Activated B cell treated with CpG ODN at 0.5 μM for 24 hours (primary cell): ENCODE measurements at regions of chr19 and their contacts with region 1.

Region 1: GRCh38 chr19:3821857-3822364 is 35.7 kb upstream of the MATK start:
- DNase-seq: peak; percentile 83
- ATAC-seq: peak; percentile 93
- H3K4me3 Mint-ChIP-seq: no peak overlapping the region
- H3K27ac Mint-ChIP-seq: peak overlapping the region; percentile 16
- H3K4me1 Mint-ChIP-seq: peaks cover 15% of the 10 kb centered on the region
- H3K27me3 Mint-ChIP-seq: no peaks in the 10 kb centered on the region
- CTCF ChIP-seq: peak; percentile 66

Region 2: DNA sequence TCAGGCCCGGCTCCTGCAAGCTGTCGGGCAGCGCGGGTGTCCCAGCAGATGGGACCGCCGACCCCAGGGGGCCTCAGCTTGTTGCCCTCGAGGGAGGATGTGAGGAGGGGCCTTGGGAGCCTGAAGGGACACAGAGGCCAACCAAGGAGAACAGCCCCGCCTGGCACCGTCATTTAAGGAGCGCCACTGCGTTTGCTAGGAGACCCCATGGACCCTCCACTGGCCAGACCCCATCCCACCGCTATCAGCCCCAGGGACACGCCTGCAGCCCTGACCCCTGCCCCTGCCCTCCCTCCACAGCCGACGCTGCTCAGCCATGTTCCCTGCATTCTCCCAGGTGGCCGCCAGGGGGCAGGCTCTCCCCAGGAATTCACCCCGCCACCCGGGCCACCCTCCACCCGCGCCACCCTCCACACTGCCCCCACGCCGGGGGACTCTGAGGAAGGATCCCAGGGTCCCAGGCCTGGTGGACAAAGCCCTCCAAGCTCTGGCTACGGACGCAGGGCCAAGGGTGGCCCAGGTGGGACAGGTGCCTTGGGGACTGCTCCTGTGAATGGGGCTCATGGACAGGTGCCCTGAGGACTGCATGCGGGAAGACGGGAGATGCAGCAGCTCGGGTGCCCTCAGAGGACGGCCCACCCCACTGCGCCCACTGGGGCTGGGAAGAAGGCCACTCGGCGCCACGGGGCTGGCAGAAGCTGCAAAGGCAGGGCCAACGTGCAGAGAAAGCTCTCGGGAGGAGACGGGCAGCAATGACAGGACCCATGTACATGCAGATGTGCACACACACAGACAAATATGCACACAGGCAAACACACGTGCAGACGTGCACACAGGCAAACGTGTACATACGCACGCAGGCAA is 156.0 kb before region 1 on chr19:
- CTCF ChIA-PET with region 1: no interaction called
- POLR2A ChIA-PET with region 1: no interaction called
- intact Hi-C with region 1: loop called (anchors 1 kb)
- DNase-seq: peak; percentile 83
- ATAC-seq: peak; percentile 90
- H3K4me3 Mint-ChIP-seq: peak overlapping the region; percentile 64
- H3K27ac Mint-ChIP-seq: peak overlapping the region; percentile 59
- H3K4me1 Mint-ChIP-seq: peaks cover 34% of the 10 kb centered on the region
- H3K27me3 Mint-ChIP-seq: no peaks in the 10 kb centered on the region
- CTCF ChIP-seq: peak; percentile 40

Region 3: DNA sequence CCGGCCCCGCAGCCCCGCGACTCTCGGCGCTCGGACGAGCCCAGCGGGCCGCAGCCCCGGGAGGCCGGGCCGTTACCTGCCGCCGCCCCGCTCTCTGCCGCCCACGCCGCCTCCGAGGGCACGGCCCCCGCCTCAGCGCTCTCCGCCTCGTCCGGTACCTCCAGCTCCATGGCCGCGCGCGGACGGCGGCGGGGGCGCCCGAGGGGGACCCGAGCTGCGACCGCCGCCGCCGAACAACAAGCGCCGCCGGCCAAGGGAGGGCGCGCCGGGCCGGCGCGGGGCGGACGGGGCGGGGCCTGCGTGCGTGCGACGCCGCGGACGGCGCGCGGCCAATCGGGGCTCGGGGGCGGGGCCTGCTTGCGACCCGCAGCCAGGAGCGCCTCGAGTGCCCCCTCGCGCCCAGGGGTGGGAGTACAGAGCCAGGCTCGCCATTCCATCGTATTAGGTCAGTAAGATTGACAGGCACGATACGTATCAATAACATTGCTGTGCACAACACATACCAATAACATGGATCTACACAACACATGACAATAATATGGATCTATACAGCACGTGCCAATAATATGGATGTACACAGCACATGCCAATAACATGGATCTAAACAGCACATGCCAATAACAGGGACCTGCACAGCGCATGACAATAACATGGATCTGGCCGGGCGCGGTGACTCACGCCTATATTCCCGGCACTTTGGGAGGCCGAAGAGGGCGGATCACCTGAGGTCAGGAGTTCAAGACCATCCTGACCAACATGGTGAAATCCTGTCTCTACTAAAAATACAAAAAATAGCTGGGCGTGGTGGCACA is 121.5 kb before region 1 on chr19 and contains the start of gene PIP5K1C:
- CTCF ChIA-PET with region 1: no interaction called
- POLR2A ChIA-PET with region 1: no interaction called
- intact Hi-C with region 1: loop called (anchors 10 kb)
- DNase-seq: peak; percentile 96
- ATAC-seq: peak; percentile 98
- H3K4me3 Mint-ChIP-seq: peak within 1 kb of the TSS; percentile 89
- H3K27ac Mint-ChIP-seq: peak within 1 kb of the TSS; percentile 65
- H3K4me1 Mint-ChIP-seq: peaks cover 37% of the 10 kb centered on the region
- H3K27me3 Mint-ChIP-seq: no peaks in the 10 kb centered on the region
- CTCF ChIP-seq: no peak
- total RNA-seq, gene PIP5K1C: 28.3 and 31.1 TPM in 2 replicates

Region 4: GRCh38 chr19:3783660-3784584 is 38.0 kb before region 1 on chr19:
- CTCF ChIA-PET with region 1: interaction called, 4 read pairs
- POLR2A ChIA-PET with region 1: no interaction called
- intact Hi-C with region 1: loop called (anchors 1 kb)
- DNase-seq: no peak
- ATAC-seq: peak; percentile 51
- H3K4me3 Mint-ChIP-seq: no peak overlapping the region
- H3K27ac Mint-ChIP-seq: no peak overlapping the region
- H3K4me1 Mint-ChIP-seq: peaks cover 16% of the 10 kb centered on the region
- H3K27me3 Mint-ChIP-seq: peaks cover 4% of the 10 kb centered on the region
- CTCF ChIP-seq: no peak

Region 5: DNA sequence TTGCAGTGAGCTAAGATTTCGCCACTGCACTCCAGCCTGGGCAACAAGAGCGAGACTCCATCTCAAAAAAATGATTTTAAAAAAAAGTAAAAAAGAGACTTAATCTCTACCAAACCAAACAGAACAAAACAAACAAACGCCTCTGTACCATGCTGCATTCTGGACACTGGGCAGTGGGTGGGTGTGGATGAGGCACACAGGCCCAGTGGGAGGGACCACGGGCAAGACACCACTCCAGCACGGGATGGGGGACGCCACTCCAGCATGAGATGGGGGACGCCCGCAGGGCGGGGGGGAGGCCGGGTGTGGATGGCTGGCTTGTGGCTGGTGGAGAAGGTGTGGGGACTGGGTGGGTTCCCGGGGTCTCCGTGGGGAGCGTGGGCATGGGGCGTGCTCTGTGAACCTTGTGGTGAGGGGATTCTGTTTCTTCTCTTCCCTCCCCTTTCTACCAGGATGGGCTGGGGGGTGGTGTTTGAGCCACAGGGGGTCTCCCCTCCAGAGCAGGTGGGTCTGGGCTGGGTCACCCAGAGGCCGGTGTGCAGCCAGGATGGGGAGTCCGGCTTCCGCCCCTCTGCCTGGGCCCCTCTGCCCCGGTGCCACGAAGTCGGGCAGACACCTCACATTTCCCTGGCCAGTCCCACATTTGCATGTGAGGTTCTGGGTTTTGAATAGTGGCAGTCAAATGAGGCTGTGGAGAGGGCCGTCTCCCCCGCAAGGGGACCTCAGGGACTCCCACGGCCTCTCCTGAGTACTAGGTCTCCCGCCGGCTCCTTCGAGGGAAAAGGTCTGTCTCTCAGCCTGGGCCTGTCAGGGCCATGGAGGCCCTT is 11.8 kb before region 1 on chr19:
- CTCF ChIA-PET with region 1: interaction called, 17 read pairs
- POLR2A ChIA-PET with region 1: interaction called, 14 read pairs
- intact Hi-C with region 1: loop called (anchors 1 kb)
- DNase-seq: no peak
- ATAC-seq: peak; percentile 66
- H3K4me3 Mint-ChIP-seq: peak overlapping the region; percentile 52
- H3K27ac Mint-ChIP-seq: peak overlapping the region; percentile 77
- H3K4me1 Mint-ChIP-seq: peaks cover 62% of the 10 kb centered on the region
- H3K27me3 Mint-ChIP-seq: no peaks in the 10 kb centered on the region
- CTCF ChIP-seq: no peak

Region 6: GRCh38 chr19:3839941-3840340 is 18.0 kb after region 1 on chr19:
- CTCF ChIA-PET with region 1: no interaction called
- POLR2A ChIA-PET with region 1: no interaction called
- intact Hi-C with region 1: no loop called
- DNase-seq: no peak
- ATAC-seq: no peak
- H3K4me3 Mint-ChIP-seq: no peak overlapping the region
- H3K27ac Mint-ChIP-seq: no peak overlapping the region
- H3K4me1 Mint-ChIP-seq: no peaks in the 10 kb centered on the region
- H3K27me3 Mint-ChIP-seq: no peaks in the 10 kb centered on the region
- CTCF ChIP-seq: no peak

Region 7: GRCh38 chr19:3866910-3867638 is 45.2 kb after region 1 on chr19:
- CTCF ChIA-PET with region 1: no interaction called
- POLR2A ChIA-PET with region 1: no interaction called
- intact Hi-C with region 1: no loop called
- DNase-seq: no peak
- ATAC-seq: no peak
- H3K4me3 Mint-ChIP-seq: no peak overlapping the region
- H3K27ac Mint-ChIP-seq: no peak overlapping the region
- H3K4me1 Mint-ChIP-seq: peaks cover 7% of the 10 kb centered on the region
- H3K27me3 Mint-ChIP-seq: peaks cover 38% of the 10 kb centered on the region
- CTCF ChIP-seq: no peak

Region 8: GRCh38 chr19:3950871-3951861 is 129.3 kb after region 1 on chr19:
- CTCF ChIA-PET with region 1: no interaction called
- POLR2A ChIA-PET with region 1: interaction called, 14 read pairs
- intact Hi-C with region 1: no loop called
- DNase-seq: no peak
- ATAC-seq: peak; percentile 14
- H3K4me3 Mint-ChIP-seq: peak overlapping the region; percentile 69
- H3K27ac Mint-ChIP-seq: no peak overlapping the region
- H3K4me1 Mint-ChIP-seq: peaks cover 7% of the 10 kb centered on the region
- H3K27me3 Mint-ChIP-seq: peaks cover 5% of the 10 kb centered on the region
- CTCF ChIP-seq: no peak